Endothelial cell of umbilical vein (primary cell): ENCODE measurements at regions of chr10 and their contacts with region 1.

Region 1: DNA sequence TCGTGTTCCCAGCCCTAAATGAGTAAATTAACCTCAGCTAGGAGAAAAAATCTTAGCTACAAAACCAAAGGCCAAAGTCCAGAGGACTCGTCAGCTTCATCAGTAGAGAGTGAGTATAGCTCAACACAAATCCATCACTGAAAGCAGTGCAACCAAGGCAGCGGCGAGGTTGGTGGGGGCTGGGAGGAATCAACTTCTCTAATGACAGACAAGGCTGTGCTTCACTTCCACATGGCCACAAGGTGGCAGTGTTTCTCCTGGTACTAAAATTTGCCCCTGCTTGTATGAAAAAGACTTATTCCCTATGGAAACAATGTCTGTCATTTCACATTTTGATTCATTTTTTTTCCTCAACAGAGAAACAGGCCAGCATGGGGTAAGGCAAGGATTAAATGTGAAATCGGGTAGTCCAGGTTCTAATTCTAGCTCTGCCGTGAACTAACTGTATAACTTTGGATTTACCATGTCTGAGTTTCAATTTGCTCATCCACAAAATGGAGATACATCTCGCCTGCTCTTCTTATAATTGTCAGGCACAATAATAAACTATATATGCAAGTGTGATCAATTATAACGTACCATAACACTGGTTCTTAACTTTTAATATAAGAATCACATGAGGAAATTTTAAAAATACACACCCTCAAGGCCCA is 39.3 kb downstream of the FAS start:
- DNase-seq: peak; percentile 79
- H3K4me3 ChIP-seq: no peak overlapping the region
- H3K27ac ChIP-seq: no peak overlapping the region
- H3K4me1 ChIP-seq: peaks cover 19% of the 10 kb centered on the region
- H3K27me3 ChIP-seq: peaks cover 0 to 2% of the 10 kb centered on the region in 2 experiments
- CTCF ChIP-seq: peak; percentile 66 to 84
- POLR2A ChIP-seq: no peak

Region 2: DNA sequence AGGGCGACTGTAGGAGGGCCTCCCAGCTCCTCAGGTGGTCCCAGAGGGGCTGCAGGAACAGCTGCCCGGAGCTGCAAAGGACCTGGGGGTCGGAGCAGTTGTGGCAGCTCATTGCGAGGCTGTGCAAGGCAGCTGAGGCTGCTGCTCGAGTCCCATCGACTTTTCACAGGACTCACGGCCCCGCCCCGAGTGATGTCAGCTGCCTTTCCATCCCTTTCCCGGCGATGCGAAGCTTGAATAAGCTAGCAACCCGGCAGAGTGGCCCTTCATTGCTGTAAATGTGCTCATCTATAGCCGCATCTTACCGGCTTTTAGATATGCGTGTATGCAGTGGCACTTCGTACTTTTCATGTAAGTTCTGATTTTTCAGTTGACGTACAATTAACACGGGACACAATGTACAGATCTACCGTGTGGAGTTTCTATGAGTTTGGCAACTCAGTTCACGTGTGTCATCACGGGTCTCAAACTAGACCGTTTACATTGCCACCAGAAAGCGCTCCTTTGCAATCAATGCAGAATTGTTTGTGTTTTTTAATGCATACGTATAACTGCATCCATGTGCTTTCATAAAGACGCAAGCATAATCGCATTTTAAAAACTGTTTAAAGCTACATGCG is 177.4 kb after region 1 on chr10 and contains the start of gene CH25H:
- CTCF ChIA-PET with region 1: interaction called, 52 read pairs
- POLR2A ChIA-PET with region 1: interaction called, 3 read pairs
- dilution Hi-C with region 1: no loop called
- intact Hi-C with region 1: no loop called
- DNase-seq: peak; percentile 76
- H3K4me3 ChIP-seq: peak within 1 kb of the TSS; percentile 34 to 84 (median 49)
- H3K27ac ChIP-seq: peak within 1 kb of the TSS; percentile 7
- H3K4me1 ChIP-seq: peaks cover 23% of the 10 kb centered on the region
- H3K27me3 ChIP-seq: peaks cover 16 to 27% of the 10 kb centered on the region in 2 experiments
- CTCF ChIP-seq: no peak
- POLR2A ChIP-seq: no peak
- total RNA-seq, gene CH25H: 0.32 TPM in 1 of 2 replicates, not detected in the other